Tibial artery (tissue), 4 donors: ENCODE measurements at regions of chr2 and their contacts with region 1.

Region 1: DNA sequence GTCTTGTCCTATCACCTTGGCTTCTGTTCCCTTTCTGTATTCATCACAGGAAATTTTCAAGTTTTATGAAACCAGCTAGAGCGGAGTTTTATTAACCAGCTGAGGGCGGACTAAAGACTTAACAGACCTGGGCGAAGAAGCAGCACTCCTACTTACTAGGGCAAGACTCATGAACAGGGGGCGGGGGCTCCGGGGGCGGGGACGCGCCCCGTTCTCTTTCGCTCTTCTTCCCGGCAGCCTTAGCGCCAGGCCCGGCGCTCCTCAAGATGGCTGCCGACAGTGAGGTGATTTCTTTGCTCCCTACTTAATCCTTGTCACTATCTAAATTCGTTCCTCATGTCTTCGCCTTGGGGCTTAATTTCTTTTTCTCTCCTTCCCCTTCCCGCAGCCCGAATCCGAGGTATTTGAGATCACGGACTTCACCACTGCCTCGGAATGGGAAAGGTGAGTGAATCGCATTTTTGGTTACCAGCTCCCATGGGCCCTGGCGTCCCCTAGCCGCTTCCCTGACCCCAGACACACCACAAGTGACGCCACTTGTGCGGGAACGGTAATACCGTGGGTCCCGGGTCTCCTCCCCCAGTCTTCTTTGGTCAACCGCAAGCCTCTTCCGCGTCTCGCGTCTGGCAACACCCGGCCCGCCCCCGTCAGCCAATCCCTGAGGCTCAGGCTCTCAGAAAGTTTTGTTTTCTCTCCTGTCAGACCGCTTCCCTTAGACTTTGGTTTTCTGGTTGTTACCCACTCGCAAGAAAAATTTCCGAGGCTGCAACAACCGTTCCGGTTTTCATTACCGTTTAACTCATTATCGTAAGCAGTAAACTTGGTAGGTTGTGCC is at the start of gene RAB3GAP1:
- DNase-seq: peak; percentile 78 to 86
- H3K4me3 ChIP-seq: peak within 1 kb of the TSS; percentile 67 to 81
- H3K27ac ChIP-seq: peak within 1 kb of the TSS; percentile 92 to 95
- H3K4me1 ChIP-seq: peaks cover 0 to 43% (median 26%) of the 10 kb centered on the region in 4 donors
- H3K27me3 ChIP-seq: no peaks in the 10 kb centered on the region
- CTCF ChIP-seq: no peak

Region 2: DNA sequence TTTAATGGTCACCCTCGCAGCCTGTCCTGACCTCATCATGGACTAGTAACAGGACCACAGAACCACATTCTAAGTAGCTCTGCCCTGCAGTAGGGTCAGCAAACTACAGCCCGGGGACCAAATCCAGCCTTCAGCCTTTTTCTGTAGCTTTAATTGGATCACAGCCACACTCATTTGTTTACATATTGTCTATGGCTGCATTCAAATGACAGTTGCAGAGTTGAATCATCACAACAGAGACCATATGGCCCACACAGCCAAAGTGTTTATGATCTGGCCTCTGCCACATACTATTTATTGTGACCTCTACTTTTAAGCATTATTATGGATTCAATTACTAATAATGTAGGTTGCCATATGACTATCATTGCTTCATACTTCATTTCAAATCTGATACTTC is 52.7 kb before region 1 on chr2:
- intact Hi-C with region 1: no loop called
- DNase-seq: no peak
- H3K4me3 ChIP-seq: no peak overlapping the region
- H3K27ac ChIP-seq: no peak overlapping the region
- H3K4me1 ChIP-seq: peaks cover 0 to 2% (median 0%) of the 10 kb centered on the region in 4 donors
- H3K27me3 ChIP-seq: peaks cover 0 to 2% of the 10 kb centered on the region in 2 donors
- CTCF ChIP-seq: no peak

Region 3: GRCh38 chr2:135531231-135532228 is 479.3 kb after region 1 on chr2 and contains the start of gene R3HDM1:
- intact Hi-C with region 1: loop called (anchors 5 kb)
- DNase-seq: peak; percentile 99
- H3K4me3 ChIP-seq: peak within 1 kb of the TSS; percentile 71 to 93
- H3K27ac ChIP-seq: peak within 1 kb of the TSS; percentile 86 to 89
- H3K4me1 ChIP-seq: peaks cover 3 to 18% (median 9%) of the 10 kb centered on the region in 4 donors
- H3K27me3 ChIP-seq: no peaks in the 10 kb centered on the region
- CTCF ChIP-seq: no peak

Region 4: DNA sequence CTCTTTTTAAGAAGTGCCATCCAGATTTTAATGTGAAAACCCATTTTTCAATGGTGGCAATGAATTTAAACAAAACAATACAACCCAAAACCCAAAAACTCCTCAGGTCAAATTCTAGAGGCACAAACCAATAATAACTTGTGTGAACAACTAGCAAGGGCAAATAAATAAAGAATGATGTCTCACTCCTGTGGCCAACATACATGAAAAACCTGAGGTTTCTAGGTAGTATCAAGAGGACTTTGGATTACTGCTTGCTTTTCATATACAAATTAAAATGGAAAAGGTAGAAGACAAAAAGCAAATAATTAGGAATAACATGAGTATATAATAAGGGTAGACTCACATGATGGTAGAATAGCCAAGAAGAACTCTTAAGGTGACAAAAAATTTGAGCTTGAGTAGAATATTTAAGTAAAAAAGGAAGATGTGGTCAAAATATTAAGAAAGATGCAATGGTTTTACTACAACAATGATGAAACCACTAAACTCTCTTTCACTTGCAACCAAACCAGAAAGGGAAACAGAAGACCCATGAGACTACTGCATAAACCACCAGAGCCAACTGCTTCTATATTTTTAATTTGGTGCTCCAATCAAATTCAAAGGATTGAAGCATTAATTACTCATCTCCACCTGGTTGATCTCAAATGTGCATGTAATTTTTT is 879.7 kb after region 1 on chr2:
- intact Hi-C with region 1: no loop called
- DNase-seq: no peak
- H3K4me3 ChIP-seq: no peak overlapping the region
- H3K27ac ChIP-seq: no peak overlapping the region
- H3K4me1 ChIP-seq: no peaks in the 10 kb centered on the region
- H3K27me3 ChIP-seq: no peaks in the 10 kb centered on the region
- CTCF ChIP-seq: no peak